Activated CD4-positive, alpha-beta T cell treated with anti-CD3 and anti-CD28 coated beads for 36 hours (primary cell): ENCODE measurements at regions of chr1 and their contacts with region 1.

Region 1: GRCh38 chr1:182397771-182398393 is 2.6 kb downstream of the TEDDM1 start:
- DNase-seq: no peak
- ATAC-seq: no peak
- H3K4me3 Mint-ChIP-seq: no peak overlapping the region
- H3K27ac Mint-ChIP-seq: no peak overlapping the region
- H3K4me1 Mint-ChIP-seq: peaks cover 2% of the 10 kb centered on the region
- H3K27me3 Mint-ChIP-seq: peaks cover 6% of the 10 kb centered on the region

Region 2: GRCh38 chr1:182301467-182302198 is 96.2 kb before region 1 on chr1:
- CTCF ChIA-PET with region 1: interaction called, 6 read pairs
- POLR2A ChIA-PET with region 1: no interaction called
- intact Hi-C with region 1: loop called (anchors 2 to 5 kb)
- DNase-seq: peak; percentile 65
- ATAC-seq: peak; percentile 79
- H3K4me3 Mint-ChIP-seq: no peak overlapping the region
- H3K27ac Mint-ChIP-seq: peak overlapping the region; percentile 71
- H3K4me1 Mint-ChIP-seq: peaks cover 30% of the 10 kb centered on the region
- H3K27me3 Mint-ChIP-seq: no peaks in the 10 kb centered on the region

Region 3: DNA sequence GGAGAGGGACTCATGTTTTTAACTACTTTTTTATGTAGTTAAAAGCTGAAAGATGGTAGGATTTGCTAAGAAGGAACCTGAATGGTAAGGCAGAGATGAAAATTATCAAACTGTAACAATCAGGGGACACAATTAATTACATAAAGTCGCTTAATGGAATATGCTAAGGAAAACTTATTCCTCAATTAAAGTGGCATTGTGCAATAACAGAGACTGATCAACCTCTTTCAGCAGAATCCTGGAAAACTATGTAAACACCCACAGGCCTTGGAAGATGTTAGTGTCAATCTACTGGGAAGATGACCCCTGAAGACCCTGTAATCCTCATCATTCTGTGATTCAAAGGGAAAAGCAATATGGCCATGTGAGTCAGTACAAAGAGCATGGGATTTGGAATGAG is 344.9 kb after region 1 on chr1:
- CTCF ChIA-PET with region 1: no interaction called
- POLR2A ChIA-PET with region 1: no interaction called
- intact Hi-C with region 1: no loop called
- DNase-seq: no peak
- ATAC-seq: no peak
- H3K4me3 Mint-ChIP-seq: no peak overlapping the region
- H3K27ac Mint-ChIP-seq: no peak overlapping the region
- H3K4me1 Mint-ChIP-seq: no peaks in the 10 kb centered on the region
- H3K27me3 Mint-ChIP-seq: peaks cover 7% of the 10 kb centered on the region